Sciatic nerve (tissue), 2 donors: ENCODE measurements at regions of chr11 and their contacts with region 1.

Region 1: GRCh38 chr11:90722552-90723190 is 499.8 kb upstream of the CHORDC1 start:
- DNase-seq: no peak
- ATAC-seq: no peak

Region 2: DNA sequence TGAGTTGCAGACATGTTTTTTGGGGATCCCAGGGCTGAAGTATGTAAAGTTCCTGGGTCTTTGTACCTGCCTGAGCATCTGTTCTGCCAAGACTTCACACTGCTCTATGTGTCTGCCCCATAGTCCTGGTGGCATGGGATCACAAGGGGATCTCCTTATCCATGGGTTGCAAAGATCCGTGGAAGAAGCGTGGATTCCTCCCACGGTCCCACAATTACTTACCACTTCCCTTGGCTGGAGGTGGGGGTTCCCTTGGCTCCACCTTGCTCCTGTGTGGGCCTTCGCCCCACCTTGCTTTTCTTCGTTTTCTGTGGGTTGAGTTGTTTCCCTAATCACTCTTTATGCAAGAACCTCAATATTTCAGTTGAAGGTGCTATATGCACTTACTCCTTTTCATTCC is 342.5 kb before region 1 on chr11:
- intact Hi-C with region 1: no loop called
- DNase-seq: no peak
- ATAC-seq: no peak

Region 3: DNA sequence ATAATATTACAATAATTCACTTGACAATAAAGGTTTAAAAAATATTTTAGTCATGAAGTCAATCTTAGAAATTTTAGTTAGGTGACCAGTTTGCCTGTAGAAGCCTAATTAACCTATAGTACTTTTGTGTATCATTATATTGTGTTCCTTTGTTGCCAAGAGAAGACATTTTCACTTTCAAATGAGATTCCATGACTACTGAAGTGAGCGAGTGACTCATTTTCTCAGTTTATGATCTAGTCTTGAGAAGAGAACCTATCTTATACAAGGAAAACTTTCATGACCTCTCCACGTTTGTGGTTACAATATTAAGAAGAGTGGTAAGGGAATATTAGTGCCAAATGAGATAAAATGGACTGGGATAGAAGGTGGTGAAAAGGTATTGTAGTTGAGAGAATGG is 76.0 kb before region 1 on chr11:
- intact Hi-C with region 1: no loop called
- DNase-seq: no peak
- ATAC-seq: no peak

Region 4: DNA sequence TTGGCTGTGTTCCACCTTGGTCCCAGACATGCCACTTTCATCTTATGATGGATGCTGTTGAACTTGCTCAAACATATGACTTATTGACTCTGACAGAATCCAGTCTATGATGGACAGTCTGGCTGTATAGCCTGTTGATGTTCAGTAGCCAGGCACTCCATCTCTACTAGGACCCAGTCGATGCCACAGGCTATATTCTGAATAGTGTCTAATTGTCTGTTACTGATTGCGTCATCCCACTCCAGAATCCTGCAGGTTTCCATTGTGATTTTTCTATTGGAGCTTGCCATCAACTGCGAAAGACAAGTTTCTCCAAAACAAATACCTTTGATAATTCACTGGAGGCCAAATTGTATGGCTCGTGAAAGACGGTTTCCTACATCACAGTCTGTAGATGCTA is 18.2 kb before region 1 on chr11:
- intact Hi-C with region 1: no loop called
- DNase-seq: no peak
- ATAC-seq: no peak

Region 5: DNA sequence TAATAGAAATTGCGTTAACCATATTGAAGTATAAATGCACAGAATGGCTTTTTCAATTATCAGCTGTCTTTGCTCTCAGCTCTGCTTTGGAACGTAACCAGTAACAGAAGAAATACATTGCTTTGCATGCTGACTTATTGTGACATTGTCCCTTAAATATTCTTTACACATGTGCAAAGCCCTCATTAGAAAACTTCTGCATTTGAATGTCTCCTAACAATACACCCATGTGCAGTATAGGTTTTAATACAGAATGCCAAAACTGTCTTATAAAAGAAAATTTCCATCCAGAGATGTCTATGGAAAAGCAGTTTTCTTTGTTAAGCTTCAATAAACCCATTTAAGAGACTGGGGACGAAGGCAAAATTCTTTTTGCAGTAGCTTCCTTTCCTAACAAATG is 60.4 kb after region 1 on chr11:
- intact Hi-C with region 1: loop called (anchors 2 kb)
- DNase-seq: no peak
- ATAC-seq: no peak